CD8-positive, alpha-beta T cell (primary cell): ENCODE measurements at regions of chr10 and their contacts with region 1.

Region 1: DNA sequence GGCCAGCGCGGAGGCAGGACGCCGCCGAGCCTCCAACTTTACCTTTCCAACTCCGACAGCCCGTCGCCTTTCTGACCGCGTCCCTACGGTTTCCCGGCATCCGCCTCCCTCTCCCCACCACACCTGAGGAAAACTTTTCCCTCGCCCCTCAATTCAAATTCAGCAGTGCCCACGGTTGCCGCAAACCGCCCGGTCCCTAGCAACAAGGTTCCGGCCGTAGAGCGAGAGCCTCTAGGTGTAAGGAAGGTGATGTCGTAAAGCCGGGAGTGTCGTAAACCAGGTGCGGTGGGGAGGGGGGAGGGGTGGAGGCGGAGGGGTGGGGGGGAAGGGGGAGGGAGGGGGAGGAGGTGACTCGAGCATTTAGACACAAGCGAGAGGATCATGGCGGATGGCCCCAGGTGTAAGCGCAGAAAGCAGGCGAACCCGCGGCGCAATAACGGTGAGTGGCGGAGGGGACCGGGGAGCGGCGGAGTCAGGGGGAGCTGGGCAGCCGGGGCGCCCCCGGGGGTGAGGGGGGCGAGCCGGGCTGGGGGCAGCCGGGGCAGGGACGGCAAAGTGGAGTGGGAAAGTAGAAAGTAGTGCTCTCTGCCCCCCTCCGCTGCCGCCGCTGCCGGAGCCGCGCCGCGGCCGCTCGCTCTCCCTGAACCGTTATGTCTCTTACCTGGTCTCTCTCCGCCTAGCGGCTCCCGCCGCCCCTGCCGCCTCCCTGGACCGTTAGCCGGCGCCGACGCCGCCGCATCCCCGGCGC is at the start of gene ZEB1:
- DNase-seq: peak; percentile 83 to 97 (median 90)
- ATAC-seq: peak; percentile 42
- H3K4me3 ChIP-seq: peak within 1 kb of the TSS; percentile 92 to 95
- H3K4me3 Mint-ChIP-seq: peak within 1 kb of the TSS; percentile 100
- H3K27ac ChIP-seq: peak within 1 kb of the TSS; percentile 90 to 95
- H3K27ac Mint-ChIP-seq: peak within 1 kb of the TSS; percentile 100
- H3K4me1 ChIP-seq: peaks cover 28% of the 10 kb centered on the region
- H3K4me1 Mint-ChIP-seq: peaks cover 39% of the 10 kb centered on the region
- H3K27me3 ChIP-seq: no peaks in the 10 kb centered on the region
- H3K27me3 Mint-ChIP-seq: no peaks in the 10 kb centered on the region
- CTCF ChIP-seq: no peak
- total RNA-seq, gene ZEB1: 145 to 153 TPM

Region 2: GRCh38 chr10:30583778-30584415 is 735.1 kb before region 1 on chr10:
- CTCF ChIA-PET with region 1: no interaction called
- POLR2A ChIA-PET with region 1: no interaction called
- intact Hi-C with region 1: no loop called
- DNase-seq: peak in 2 of 9 experiments; percentile 17 to 45
- ATAC-seq: no peak
- H3K4me3 ChIP-seq: peak overlapping the region in 1 of 2 experiments; percentile 31
- H3K4me3 Mint-ChIP-seq: peak overlapping the region; percentile 40
- H3K27ac ChIP-seq: no peak overlapping the region
- H3K27ac Mint-ChIP-seq: no peak overlapping the region
- H3K4me1 ChIP-seq: no peaks in the 10 kb centered on the region
- H3K4me1 Mint-ChIP-seq: peaks cover 6% of the 10 kb centered on the region
- H3K27me3 ChIP-seq: no peaks in the 10 kb centered on the region
- H3K27me3 Mint-ChIP-seq: peaks cover 2% of the 10 kb centered on the region
- CTCF ChIP-seq: no peak

Region 3: GRCh38 chr10:31133628-31134302 is 185.3 kb before region 1 on chr10:
- CTCF ChIA-PET with region 1: no interaction called
- POLR2A ChIA-PET with region 1: interaction called, 5 read pairs
- intact Hi-C with region 1: loop called in 1 of 2 experiments (anchors 2 kb)
- DNase-seq: peak; percentile 37 to 84 (median 68)
- ATAC-seq: peak; percentile 70
- H3K4me3 ChIP-seq: peak overlapping the region; percentile 67 to 71
- H3K4me3 Mint-ChIP-seq: peak overlapping the region; percentile 81
- H3K27ac ChIP-seq: peak overlapping the region; percentile 33 to 65
- H3K27ac Mint-ChIP-seq: peak overlapping the region; percentile 76
- H3K4me1 ChIP-seq: peaks cover 32% of the 10 kb centered on the region
- H3K4me1 Mint-ChIP-seq: peaks cover 37% of the 10 kb centered on the region
- H3K27me3 ChIP-seq: no peaks in the 10 kb centered on the region
- H3K27me3 Mint-ChIP-seq: no peaks in the 10 kb centered on the region
- CTCF ChIP-seq: no peak

Region 4: GRCh38 chr10:31213959-31214358 is 105.1 kb before region 1 on chr10:
- CTCF ChIA-PET with region 1: no interaction called
- POLR2A ChIA-PET with region 1: no interaction called
- intact Hi-C with region 1: loop called in 1 of 2 experiments (anchors 5 kb)
- DNase-seq: no peak
- ATAC-seq: no peak
- H3K4me3 ChIP-seq: no peak overlapping the region
- H3K4me3 Mint-ChIP-seq: no peak overlapping the region
- H3K27ac ChIP-seq: no peak overlapping the region
- H3K27ac Mint-ChIP-seq: no peak overlapping the region
- H3K4me1 ChIP-seq: no peaks in the 10 kb centered on the region
- H3K4me1 Mint-ChIP-seq: no peaks in the 10 kb centered on the region
- H3K27me3 ChIP-seq: no peaks in the 10 kb centered on the region
- H3K27me3 Mint-ChIP-seq: peaks cover 2% of the 10 kb centered on the region
- CTCF ChIP-seq: no peak

Region 5: DNA sequence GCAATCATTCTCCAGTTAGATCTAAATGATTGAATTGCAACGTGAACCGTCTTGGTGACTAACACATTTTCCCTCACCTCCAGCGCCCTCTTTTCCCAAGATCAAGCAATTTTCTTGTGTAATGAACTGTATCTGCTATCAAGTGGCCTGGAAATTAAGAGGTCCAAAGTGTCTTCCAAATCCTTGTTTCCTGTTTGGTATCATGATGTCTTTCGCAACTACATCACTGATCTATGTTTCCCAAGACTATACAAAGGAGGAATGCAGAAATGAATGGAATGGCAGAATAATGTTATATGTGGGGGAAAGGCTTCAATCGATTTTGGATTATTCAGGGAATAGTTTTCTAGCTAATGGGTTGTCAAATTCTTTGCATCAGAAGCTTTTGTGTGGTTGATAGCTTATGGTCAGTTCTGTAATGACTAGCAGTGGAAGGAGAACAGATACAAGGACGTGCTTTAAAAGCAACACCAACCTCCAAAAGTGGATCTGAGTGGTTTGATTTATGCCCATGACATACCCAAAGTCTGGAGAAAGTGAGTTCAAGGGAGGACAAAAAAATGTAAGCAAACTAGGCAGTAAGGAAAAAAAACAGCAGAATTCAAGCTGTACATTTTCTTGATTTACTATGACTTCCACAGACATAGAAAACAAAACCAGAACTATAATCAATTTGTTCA is 14.6 kb before region 1 on chr10:
- CTCF ChIA-PET with region 1: no interaction called
- POLR2A ChIA-PET with region 1: no interaction called
- intact Hi-C with region 1: no loop called
- DNase-seq: no peak
- ATAC-seq: no peak
- H3K4me3 ChIP-seq: no peak overlapping the region
- H3K4me3 Mint-ChIP-seq: no peak overlapping the region
- H3K27ac ChIP-seq: no peak overlapping the region
- H3K27ac Mint-ChIP-seq: no peak overlapping the region
- H3K4me1 ChIP-seq: no peaks in the 10 kb centered on the region
- H3K4me1 Mint-ChIP-seq: no peaks in the 10 kb centered on the region
- H3K27me3 ChIP-seq: no peaks in the 10 kb centered on the region
- H3K27me3 Mint-ChIP-seq: peaks cover 4% of the 10 kb centered on the region
- CTCF ChIP-seq: no peak

Region 6: DNA sequence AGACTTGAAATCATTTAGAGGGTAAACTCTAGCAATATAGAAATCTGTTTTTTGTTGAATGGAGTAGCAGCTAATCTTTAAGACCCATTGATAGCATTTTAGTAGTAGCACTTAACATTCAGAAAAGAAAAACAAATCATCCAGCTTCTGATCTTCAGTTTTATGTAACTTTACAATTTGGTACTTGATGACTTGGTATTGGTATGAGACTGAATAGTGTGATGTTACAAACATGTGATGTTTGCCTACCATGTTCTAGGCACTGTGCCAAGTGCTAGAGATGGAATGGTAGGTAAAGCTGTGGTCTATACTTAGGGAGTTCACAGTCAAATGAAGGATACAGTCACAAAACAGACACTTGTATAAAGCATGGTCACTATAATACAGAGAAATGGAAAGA is 21.3 kb after region 1 on chr10:
- CTCF ChIA-PET with region 1: no interaction called
- POLR2A ChIA-PET with region 1: no interaction called
- intact Hi-C with region 1: no loop called
- DNase-seq: peak in 2 of 9 experiments; percentile 16 to 27
- ATAC-seq: no peak
- H3K4me3 ChIP-seq: no peak overlapping the region
- H3K4me3 Mint-ChIP-seq: no peak overlapping the region
- H3K27ac ChIP-seq: no peak overlapping the region
- H3K27ac Mint-ChIP-seq: no peak overlapping the region
- H3K4me1 ChIP-seq: peaks cover 36% of the 10 kb centered on the region
- H3K4me1 Mint-ChIP-seq: peaks cover 38% of the 10 kb centered on the region
- H3K27me3 ChIP-seq: no peaks in the 10 kb centered on the region
- H3K27me3 Mint-ChIP-seq: no peaks in the 10 kb centered on the region
- CTCF ChIP-seq: no peak

Region 7: GRCh38 chr10:31353574-31353973 is 34.5 kb after region 1 on chr10:
- CTCF ChIA-PET with region 1: no interaction called
- POLR2A ChIA-PET with region 1: no interaction called
- intact Hi-C with region 1: loop called in 1 of 2 experiments (anchors 5 kb)
- DNase-seq: peak in 3 of 9 experiments; percentile 31 to 53 (median 39)
- ATAC-seq: peak; percentile 87
- H3K4me3 ChIP-seq: no peak overlapping the region
- H3K4me3 Mint-ChIP-seq: no peak overlapping the region
- H3K27ac ChIP-seq: no peak overlapping the region
- H3K27ac Mint-ChIP-seq: no peak overlapping the region
- H3K4me1 ChIP-seq: peaks cover 9% of the 10 kb centered on the region
- H3K4me1 Mint-ChIP-seq: peaks cover 63% of the 10 kb centered on the region
- H3K27me3 ChIP-seq: no peaks in the 10 kb centered on the region
- H3K27me3 Mint-ChIP-seq: no peaks in the 10 kb centered on the region
- CTCF ChIP-seq: no peak

Region 8: GRCh38 chr10:31928549-31929260 is 609.7 kb after region 1 on chr10 and contains the start of gene ARHGAP12:
- CTCF ChIA-PET with region 1: no interaction called
- POLR2A ChIA-PET with region 1: no interaction called
- intact Hi-C with region 1: loop called (anchors 5 to 10 kb)
- DNase-seq: peak; percentile 70 to 92 (median 84)
- ATAC-seq: peak; percentile 67
- H3K4me3 ChIP-seq: peak within 1 kb of the TSS; percentile 90 to 95
- H3K4me3 Mint-ChIP-seq: peak within 1 kb of the TSS; percentile 94
- H3K27ac ChIP-seq: peak within 1 kb of the TSS; percentile 65 to 87
- H3K27ac Mint-ChIP-seq: peak within 1 kb of the TSS; percentile 83
- H3K4me1 ChIP-seq: peaks cover 41% of the 10 kb centered on the region
- H3K4me1 Mint-ChIP-seq: peaks cover 49% of the 10 kb centered on the region
- H3K27me3 ChIP-seq: no peaks in the 10 kb centered on the region
- H3K27me3 Mint-ChIP-seq: no peaks in the 10 kb centered on the region
- CTCF ChIP-seq: no peak
- total RNA-seq, gene ARHGAP12: 15.7 to 15.9 TPM